B cell (primary cell): ENCODE measurements at regions of chr5 and their contacts with region 1.

Region 1: GRCh38 chr5:134586866-134587524 is 45.6 kb downstream of the SAR1B start:
- DNase-seq: peak; percentile 82
- ATAC-seq: peak; percentile 89
- H3K4me3 ChIP-seq: peak overlapping the region in 1 of 5 experiments; percentile 33
- H3K4me3 Mint-ChIP-seq: peak overlapping the region; percentile 49
- H3K27ac ChIP-seq: no peak overlapping the region
- H3K27ac Mint-ChIP-seq: no peak overlapping the region
- H3K4me1 ChIP-seq: peaks cover 3 to 5% of the 10 kb centered on the region in 2 donors
- H3K4me1 Mint-ChIP-seq: peaks cover 21% of the 10 kb centered on the region
- H3K27me3 ChIP-seq: no peaks in the 10 kb centered on the region
- H3K27me3 Mint-ChIP-seq: no peaks in the 10 kb centered on the region
- CTCF ChIP-seq: peak; percentile 86

Region 2: GRCh38 chr5:134184155-134185135 is 402.6 kb before region 1 on chr5:
- CTCF ChIA-PET with region 1: interaction called, 10 read pairs
- POLR2A ChIA-PET with region 1: no interaction called
- intact Hi-C with region 1: loop called (anchors 1 kb)
- DNase-seq: peak; percentile 83
- ATAC-seq: peak; percentile 99
- H3K4me3 ChIP-seq: no peak overlapping the region
- H3K4me3 Mint-ChIP-seq: no peak overlapping the region
- H3K27ac ChIP-seq: no peak overlapping the region
- H3K27ac Mint-ChIP-seq: no peak overlapping the region
- H3K4me1 ChIP-seq: peaks cover 0 to 6% of the 10 kb centered on the region in 2 donors
- H3K4me1 Mint-ChIP-seq: peaks cover 5% of the 10 kb centered on the region
- H3K27me3 ChIP-seq: no peaks in the 10 kb centered on the region
- H3K27me3 Mint-ChIP-seq: no peaks in the 10 kb centered on the region
- CTCF ChIP-seq: peak; percentile 96

Region 3: GRCh38 chr5:134304311-134304710 is 282.7 kb before region 1 on chr5:
- CTCF ChIA-PET with region 1: interaction called, 167 read pairs
- POLR2A ChIA-PET with region 1: interaction called, 3 read pairs
- intact Hi-C with region 1: loop called (anchors 1 kb)
- DNase-seq: no peak
- ATAC-seq: no peak
- H3K4me3 ChIP-seq: no peak overlapping the region
- H3K4me3 Mint-ChIP-seq: no peak overlapping the region
- H3K27ac ChIP-seq: no peak overlapping the region
- H3K27ac Mint-ChIP-seq: no peak overlapping the region
- H3K4me1 ChIP-seq: peaks cover 0 to 2% of the 10 kb centered on the region in 2 donors
- H3K4me1 Mint-ChIP-seq: no peaks in the 10 kb centered on the region
- H3K27me3 ChIP-seq: no peaks in the 10 kb centered on the region
- H3K27me3 Mint-ChIP-seq: no peaks in the 10 kb centered on the region
- CTCF ChIP-seq: no peak

Region 4: DNA sequence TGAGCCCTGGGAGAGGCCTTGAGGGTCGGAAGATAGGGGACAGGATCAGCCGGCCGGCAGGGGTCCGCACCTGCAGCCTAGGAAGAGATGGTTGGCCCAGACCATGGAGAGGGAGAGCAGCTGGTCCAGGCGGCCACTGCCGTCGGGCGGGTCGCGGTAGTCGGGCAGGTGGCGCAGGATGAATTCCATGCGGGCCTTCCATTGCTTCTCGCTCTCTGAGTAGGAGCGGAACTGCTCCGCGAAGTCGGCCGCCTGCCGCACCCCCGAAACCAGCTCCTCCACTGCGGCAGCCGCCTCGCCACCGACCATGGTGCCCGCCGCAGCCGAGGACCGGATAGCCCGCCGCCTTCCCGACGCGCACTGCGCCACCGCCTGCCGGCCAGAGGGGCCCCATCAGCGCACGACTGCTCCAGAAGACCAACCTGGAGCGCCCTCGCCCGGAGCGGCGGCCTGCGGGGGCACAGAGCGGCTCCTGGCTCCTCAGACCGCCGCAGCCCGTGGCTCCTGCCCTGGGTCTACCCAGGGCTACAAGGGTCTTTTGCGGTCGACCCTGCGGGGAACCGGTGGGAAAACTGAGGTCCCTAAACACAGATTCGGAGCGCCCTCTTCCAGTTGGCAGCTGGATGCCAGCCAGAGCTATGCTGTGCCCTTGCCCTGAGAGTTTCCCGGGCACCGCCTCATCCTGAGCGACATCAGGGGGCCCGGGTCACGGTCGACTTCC is 175.3 kb before region 1 on chr5 and contains the start of gene CDKN2AIPNL:
- CTCF ChIA-PET with region 1: interaction called, 35 read pairs
- POLR2A ChIA-PET with region 1: interaction called, 7 read pairs
- intact Hi-C with region 1: no loop called
- DNase-seq: peak; percentile 92
- ATAC-seq: peak; percentile 100
- H3K4me3 ChIP-seq: peak within 1 kb of the TSS; percentile 6 to 99 (median 87)
- H3K4me3 Mint-ChIP-seq: peak within 1 kb of the TSS; percentile 94
- H3K27ac ChIP-seq: peak within 1 kb of the TSS; percentile 64 to 68
- H3K27ac Mint-ChIP-seq: peak within 1 kb of the TSS; percentile 93
- H3K4me1 ChIP-seq: peaks cover 15 to 19% of the 10 kb centered on the region in 2 donors
- H3K4me1 Mint-ChIP-seq: peaks cover 39% of the 10 kb centered on the region
- H3K27me3 ChIP-seq: no peaks in the 10 kb centered on the region
- H3K27me3 Mint-ChIP-seq: no peaks in the 10 kb centered on the region
- CTCF ChIP-seq: peak; percentile 83
- total RNA-seq, gene CDKN2AIPNL: 15.8 and 17.2 TPM in 2 replicates

Region 5: DNA sequence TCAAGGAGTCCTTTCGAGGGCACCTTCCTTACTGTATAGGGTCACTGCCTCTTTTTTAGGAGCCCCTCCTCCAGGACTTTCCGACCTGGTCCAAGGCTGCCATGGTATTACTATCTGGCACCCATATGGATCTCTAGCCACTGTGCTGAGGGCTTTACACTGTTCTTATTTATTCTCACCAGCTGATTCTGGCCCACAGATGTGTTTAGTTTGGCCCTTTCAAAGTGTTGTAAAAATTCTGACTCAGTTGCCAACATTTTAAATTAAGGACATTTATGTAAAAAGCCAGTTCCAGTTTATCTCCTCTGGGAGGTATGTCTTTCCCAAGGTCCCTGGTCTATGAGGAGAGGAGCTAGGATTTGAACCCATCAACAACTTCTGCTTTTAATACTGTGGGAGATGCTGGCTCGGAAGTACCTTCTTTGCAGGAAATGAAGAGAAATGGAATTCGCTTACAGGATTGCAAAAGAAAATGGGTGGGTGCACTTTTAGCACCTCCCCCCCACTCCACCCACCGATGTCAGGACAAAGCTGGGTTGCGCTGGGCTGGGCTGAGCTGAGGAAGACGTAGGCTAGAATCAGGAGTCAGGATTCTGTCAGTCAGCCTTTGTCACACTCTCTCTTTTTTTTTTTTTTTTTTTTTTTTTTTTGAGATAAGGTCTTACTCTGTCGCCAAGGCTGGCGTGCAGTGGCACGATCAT is 53.7 kb before region 1 on chr5:
- CTCF ChIA-PET with region 1: interaction called, 10 read pairs
- POLR2A ChIA-PET with region 1: interaction called, 6 read pairs
- intact Hi-C with region 1: no loop called
- DNase-seq: no peak
- ATAC-seq: no peak
- H3K4me3 ChIP-seq: no peak overlapping the region
- H3K4me3 Mint-ChIP-seq: no peak overlapping the region
- H3K27ac ChIP-seq: peak overlapping the region in 1 of 2 donors; percentile 54
- H3K27ac Mint-ChIP-seq: peak overlapping the region; percentile 68
- H3K4me1 ChIP-seq: peaks cover 57 to 82% of the 10 kb centered on the region in 2 donors
- H3K4me1 Mint-ChIP-seq: peaks cover 92% of the 10 kb centered on the region
- H3K27me3 ChIP-seq: no peaks in the 10 kb centered on the region
- H3K27me3 Mint-ChIP-seq: no peaks in the 10 kb centered on the region
- CTCF ChIP-seq: no peak

Region 6: GRCh38 chr5:134541736-134542376 is 45.1 kb before region 1 on chr5:
- CTCF ChIA-PET with region 1: interaction called, 11 read pairs
- POLR2A ChIA-PET with region 1: no interaction called
- intact Hi-C with region 1: no loop called
- DNase-seq: no peak
- ATAC-seq: no peak
- H3K4me3 ChIP-seq: no peak overlapping the region
- H3K4me3 Mint-ChIP-seq: peak overlapping the region; percentile 78
- H3K27ac ChIP-seq: peak overlapping the region; percentile 87 to 95
- H3K27ac Mint-ChIP-seq: peak overlapping the region; percentile 91
- H3K4me1 ChIP-seq: peaks cover 74 to 75% of the 10 kb centered on the region in 2 donors
- H3K4me1 Mint-ChIP-seq: peaks cover 70% of the 10 kb centered on the region
- H3K27me3 ChIP-seq: no peaks in the 10 kb centered on the region
- H3K27me3 Mint-ChIP-seq: no peaks in the 10 kb centered on the region
- CTCF ChIP-seq: no peak

Region 7: DNA sequence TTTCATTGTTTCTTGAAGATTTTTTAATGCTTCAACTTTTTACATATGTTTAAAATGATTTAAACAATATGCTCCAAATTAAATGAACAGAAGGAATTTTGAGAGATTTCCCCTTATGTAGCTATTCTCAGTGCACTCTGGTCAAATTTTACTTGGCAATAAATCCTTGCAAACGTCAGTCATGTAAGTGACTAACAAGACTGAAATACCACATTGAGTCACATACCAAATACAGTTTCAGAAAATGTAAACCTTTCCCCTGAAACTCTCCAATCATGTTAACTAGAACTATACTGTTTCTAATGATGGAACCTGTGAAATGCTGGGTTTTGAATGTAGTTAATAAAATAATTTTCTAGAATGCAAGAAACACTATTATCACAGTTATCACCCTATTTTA is 16.1 kb after region 1 on chr5:
- CTCF ChIA-PET with region 1: interaction called, 22 read pairs
- POLR2A ChIA-PET with region 1: no interaction called
- intact Hi-C with region 1: no loop called
- DNase-seq: no peak
- ATAC-seq: no peak
- H3K4me3 ChIP-seq: no peak overlapping the region
- H3K4me3 Mint-ChIP-seq: no peak overlapping the region
- H3K27ac ChIP-seq: no peak overlapping the region
- H3K27ac Mint-ChIP-seq: no peak overlapping the region
- H3K4me1 ChIP-seq: no peaks in the 10 kb centered on the region
- H3K4me1 Mint-ChIP-seq: no peaks in the 10 kb centered on the region
- H3K27me3 ChIP-seq: no peaks in the 10 kb centered on the region
- H3K27me3 Mint-ChIP-seq: no peaks in the 10 kb centered on the region
- CTCF ChIP-seq: no peak